ENCODE measurements at regions of chr16 and their contacts with region 1.

Region 1: GRCh38 chr16:49513040-49513439 is 139.4 kb downstream of the C16orf78 start:
- DNase-seq: peak; percentile 50 to 69 (median 67)
- H3K4me3 ChIP-seq: no peak overlapping the region
- H3K27ac ChIP-seq: no peak overlapping the region
- H3K4me1 ChIP-seq: peaks cover 0 to 13% (median 2%) of the 10 kb centered on the region in 4 experiments
- H3K27me3 ChIP-seq: no peaks in the 10 kb centered on the region

Region 2: DNA sequence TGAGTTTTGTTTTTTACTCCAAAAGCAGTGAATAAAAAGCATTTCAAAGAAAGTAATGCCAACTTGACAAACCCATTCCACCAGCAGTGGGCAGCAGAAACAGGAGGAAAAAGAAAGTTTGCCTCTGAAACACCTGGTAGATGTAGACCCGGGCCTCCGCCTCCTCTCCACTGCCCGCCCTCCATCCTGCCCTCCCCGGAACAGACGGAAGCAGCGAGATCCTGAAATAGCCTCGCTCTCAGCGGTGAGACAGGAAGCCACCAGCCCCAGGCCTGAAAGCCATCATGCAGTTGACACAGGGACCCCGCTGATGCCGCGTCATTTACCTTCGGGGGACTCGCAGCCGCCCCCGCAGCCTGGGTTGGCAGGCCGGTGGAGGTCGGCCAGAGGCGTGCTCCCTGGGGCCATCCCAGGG is 71.7 kb before region 1 on chr16:
- CTCF ChIA-PET with region 1: no interaction called
- POLR2A ChIA-PET with region 1: no interaction called
- DNase-seq: peak; percentile 85 to 93 (median 90)
- H3K4me3 ChIP-seq: peak overlapping the region in 4 of 7 experiments; percentile 19 to 62 (median 40)
- H3K27ac ChIP-seq: peak overlapping the region; percentile 41 to 56
- H3K4me1 ChIP-seq: peaks cover 5 to 38% (median 28%) of the 10 kb centered on the region in 4 experiments
- H3K27me3 ChIP-seq: no peaks in the 10 kb centered on the region

Region 3: DNA sequence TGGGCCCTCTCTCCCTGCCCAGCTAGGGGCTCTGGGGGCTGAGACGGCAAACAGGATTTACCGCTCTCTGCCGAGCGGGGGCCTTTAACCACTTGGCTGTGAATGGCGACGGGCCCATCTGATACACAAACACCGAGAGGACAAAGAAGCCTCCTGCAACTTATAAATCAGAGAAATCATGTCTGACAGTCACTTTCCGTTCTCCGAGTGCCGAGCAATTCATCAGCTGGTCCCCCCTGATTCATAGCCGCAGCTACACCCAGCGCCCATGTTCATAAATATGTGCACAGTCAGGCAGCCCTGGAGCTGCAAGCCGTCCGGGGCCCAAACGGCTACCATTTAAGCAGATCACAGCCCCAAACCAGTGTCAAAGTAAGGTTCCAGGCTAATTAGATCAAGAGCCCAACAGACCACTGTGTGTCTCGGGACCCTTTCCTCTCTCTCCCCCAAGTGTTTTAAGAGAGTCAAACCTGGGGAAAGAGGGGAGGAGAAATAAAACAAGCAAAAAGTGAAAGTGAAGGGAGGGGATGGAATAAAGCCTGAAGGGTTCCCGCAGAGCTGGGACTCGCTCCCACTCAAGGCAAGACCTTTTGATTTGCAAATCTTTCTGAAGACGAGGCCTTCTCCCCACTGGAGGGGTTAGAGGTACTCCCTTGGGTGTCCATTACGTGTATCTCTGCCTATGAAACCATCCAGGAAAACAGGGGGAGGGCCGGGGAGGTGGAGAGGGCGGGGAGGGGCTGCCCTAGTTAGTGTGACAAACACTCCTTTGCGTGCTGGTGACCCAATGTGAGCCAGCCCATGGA is 15.2 kb after region 1 on chr16:
- CTCF ChIA-PET with region 1: interaction called, 11 read pairs
- POLR2A ChIA-PET with region 1: no interaction called
- DNase-seq: peak; percentile 60 to 90 (median 82)
- H3K4me3 ChIP-seq: peak overlapping the region in 6 of 7 experiments; percentile 12 to 76 (median 56)
- H3K27ac ChIP-seq: peak overlapping the region in 1 of 2 experiments; percentile 38
- H3K4me1 ChIP-seq: peaks cover 0 to 72% (median 63%) of the 10 kb centered on the region in 4 experiments
- H3K27me3 ChIP-seq: no peaks in the 10 kb centered on the region

Region 4: DNA sequence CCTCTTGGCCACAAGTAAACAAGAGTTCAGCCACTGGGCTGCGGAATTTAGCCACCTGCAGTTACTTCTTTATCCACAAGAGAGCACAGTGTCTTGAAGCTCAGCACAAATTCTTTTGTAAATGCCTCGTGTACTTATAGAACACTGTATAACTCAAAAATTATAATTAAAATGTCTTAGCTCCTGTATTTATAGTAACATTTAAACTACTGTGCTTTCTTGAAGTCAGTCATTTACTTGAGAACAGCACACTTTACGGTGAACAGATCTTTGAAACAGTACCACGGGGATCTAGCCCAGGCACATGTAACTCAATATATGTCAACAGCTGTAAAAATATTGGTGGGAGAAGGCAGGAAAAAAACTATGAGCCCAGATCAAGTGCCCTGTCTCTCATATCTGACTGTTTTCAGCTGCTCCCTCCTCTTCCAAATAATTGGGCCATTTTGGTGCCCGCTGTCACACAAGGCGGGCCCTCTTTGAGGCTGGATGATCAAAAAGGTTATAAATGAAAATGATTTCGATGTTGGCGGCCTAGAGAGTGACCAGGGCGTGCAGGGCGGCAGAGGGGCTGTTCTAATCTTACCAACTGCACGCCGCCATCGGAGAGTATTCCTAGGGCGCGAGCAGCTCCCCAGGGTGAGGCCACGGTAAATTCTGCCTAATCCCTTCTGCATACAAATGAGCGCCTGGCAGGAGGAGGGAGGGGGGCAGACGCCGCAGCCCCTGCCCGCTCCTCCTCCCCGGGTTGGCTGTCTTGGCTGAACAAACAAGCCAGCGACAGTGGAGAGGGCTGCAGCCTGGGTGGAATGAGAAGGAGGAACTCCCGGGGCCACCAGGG is 43.8 kb after region 1 on chr16:
- CTCF ChIA-PET with region 1: interaction called, 15 read pairs
- POLR2A ChIA-PET with region 1: no interaction called
- DNase-seq: peak; percentile 42 to 65 (median 65)
- H3K4me3 ChIP-seq: no peak overlapping the region
- H3K27ac ChIP-seq: no peak overlapping the region
- H3K4me1 ChIP-seq: peaks cover 0 to 10% (median 6%) of the 10 kb centered on the region in 4 experiments
- H3K27me3 ChIP-seq: no peaks in the 10 kb centered on the region

Region 5: GRCh38 chr16:49652456-49653172 is 139.6 kb after region 1 on chr16:
- CTCF ChIA-PET with region 1: no interaction called
- POLR2A ChIA-PET with region 1: no interaction called
- DNase-seq: no peak
- H3K4me3 ChIP-seq: no peak overlapping the region
- H3K27ac ChIP-seq: no peak overlapping the region
- H3K4me1 ChIP-seq: peaks cover 0 to 3% (median 0%) of the 10 kb centered on the region in 4 experiments
- H3K27me3 ChIP-seq: peaks cover 0 to 4% (median 0%) of the 10 kb centered on the region in 5 experiments